ENCODE measurements at regions of chr15 and their contacts with region 1.

Region 1: GRCh38 chr15:38817427-38818156 is 253.0 kb upstream of the RASGRP1 start:
- DNase-seq: peak; percentile 72 to 85 (median 80)
- ATAC-seq: peak; percentile 99
- H3K4me3 ChIP-seq: no peak overlapping the region
- H3K4me3 Mint-ChIP-seq: no peak overlapping the region
- H3K27ac ChIP-seq: no peak overlapping the region
- H3K27ac Mint-ChIP-seq: no peak overlapping the region
- H3K4me1 ChIP-seq: peaks cover 4% of the 10 kb centered on the region
- H3K4me1 Mint-ChIP-seq: peaks cover 5% of the 10 kb centered on the region
- H3K27me3 ChIP-seq: no peaks in the 10 kb centered on the region
- H3K27me3 Mint-ChIP-seq: peaks cover 31% of the 10 kb centered on the region
- CTCF ChIP-seq: peak; percentile 99

Region 2: DNA sequence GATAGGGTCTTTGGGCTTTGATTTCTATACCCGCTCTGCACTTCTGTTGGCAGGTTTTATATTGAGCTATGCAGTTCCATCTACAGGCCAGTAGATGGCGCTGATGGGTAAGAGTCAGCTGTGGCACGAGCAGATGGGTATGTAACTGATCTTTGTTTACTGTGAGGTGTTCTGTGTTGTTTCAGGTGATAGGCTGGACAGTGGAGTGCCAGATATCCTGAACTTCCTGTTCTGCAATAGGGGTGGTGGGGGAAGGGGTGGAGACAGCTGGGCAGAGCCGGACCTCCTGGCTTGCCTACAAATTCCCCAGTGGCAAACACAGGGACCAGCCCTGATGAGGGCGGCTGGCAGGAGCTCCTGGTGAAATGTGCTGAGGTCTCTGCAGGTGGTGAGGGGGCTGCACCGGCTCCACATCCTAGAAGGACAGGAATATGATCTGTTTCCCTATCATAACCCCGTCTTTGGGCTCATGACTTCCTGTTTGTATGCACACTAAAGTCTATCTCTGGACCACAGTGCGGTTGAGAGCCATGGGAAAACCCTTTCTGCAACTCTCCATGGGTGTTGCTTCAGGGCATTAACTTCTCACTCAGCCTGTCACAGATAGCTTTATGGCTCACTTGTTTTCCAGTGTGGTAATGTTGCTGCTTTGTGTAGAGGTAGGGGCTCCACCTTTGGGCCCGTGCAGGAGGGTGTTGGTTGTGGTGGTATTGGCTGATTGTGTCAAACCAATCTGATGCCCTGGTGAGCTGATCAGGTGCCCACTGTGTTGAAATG is 377.1 kb before region 1 on chr15:
- CTCF ChIA-PET with region 1: no interaction called
- POLR2A ChIA-PET with region 1: no interaction called
- intact Hi-C with region 1: loop called in 1 of 2 experiments (anchors 10 kb)
- DNase-seq: peak; percentile 10 to 88 (median 35)
- ATAC-seq: peak; percentile 96
- H3K4me3 ChIP-seq: no peak overlapping the region
- H3K4me3 Mint-ChIP-seq: no peak overlapping the region
- H3K27ac ChIP-seq: no peak overlapping the region
- H3K27ac Mint-ChIP-seq: no peak overlapping the region
- H3K4me1 ChIP-seq: peaks cover 7% of the 10 kb centered on the region
- H3K4me1 Mint-ChIP-seq: peaks cover 5% of the 10 kb centered on the region
- H3K27me3 ChIP-seq: peaks cover 0 to 7% of the 10 kb centered on the region in 2 experiments
- H3K27me3 Mint-ChIP-seq: peaks cover 37% of the 10 kb centered on the region
- CTCF ChIP-seq: peak; percentile 99

Region 3: DNA sequence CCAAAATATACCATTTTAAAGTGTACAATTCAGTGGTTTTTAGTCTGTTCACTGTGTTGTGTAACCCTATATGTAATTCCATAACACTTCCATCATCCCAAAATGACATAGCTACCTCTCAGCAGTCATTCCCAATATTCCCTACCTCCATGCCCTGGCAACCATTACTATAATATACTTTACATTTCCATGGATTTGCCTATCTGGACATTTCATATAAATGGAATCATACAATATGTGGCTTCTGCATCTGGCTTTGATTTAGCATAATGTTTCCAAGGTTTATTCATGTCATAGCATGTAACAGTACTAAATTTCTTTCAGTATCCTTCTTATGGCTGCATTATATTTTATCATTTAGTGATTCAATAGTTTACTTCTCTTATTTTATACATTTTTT is 338.3 kb before region 1 on chr15:
- CTCF ChIA-PET with region 1: no interaction called
- POLR2A ChIA-PET with region 1: no interaction called
- intact Hi-C with region 1: loop called in 1 of 2 experiments (anchors 5 kb)
- DNase-seq: no peak
- ATAC-seq: no peak
- H3K4me3 ChIP-seq: no peak overlapping the region
- H3K4me3 Mint-ChIP-seq: no peak overlapping the region
- H3K27ac ChIP-seq: no peak overlapping the region
- H3K27ac Mint-ChIP-seq: peak overlapping the region; percentile 0
- H3K4me1 ChIP-seq: no peaks in the 10 kb centered on the region
- H3K4me1 Mint-ChIP-seq: peaks cover 31% of the 10 kb centered on the region
- H3K27me3 ChIP-seq: no peaks in the 10 kb centered on the region
- H3K27me3 Mint-ChIP-seq: no peaks in the 10 kb centered on the region
- CTCF ChIP-seq: no peak

Region 4: GRCh38 chr15:38724827-38725226 is 92.8 kb before region 1 on chr15:
- CTCF ChIA-PET with region 1: no interaction called
- POLR2A ChIA-PET with region 1: no interaction called
- intact Hi-C with region 1: loop called in 1 of 2 experiments (anchors 5 kb)
- DNase-seq: peak in 1 of 14 experiments; percentile 7
- ATAC-seq: no peak
- H3K4me3 ChIP-seq: no peak overlapping the region
- H3K4me3 Mint-ChIP-seq: no peak overlapping the region
- H3K27ac ChIP-seq: no peak overlapping the region
- H3K27ac Mint-ChIP-seq: no peak overlapping the region
- H3K4me1 ChIP-seq: no peaks in the 10 kb centered on the region
- H3K4me1 Mint-ChIP-seq: no peaks in the 10 kb centered on the region
- H3K27me3 ChIP-seq: no peaks in the 10 kb centered on the region
- H3K27me3 Mint-ChIP-seq: no peaks in the 10 kb centered on the region
- CTCF ChIP-seq: no peak